Caco-2 (cell line): ENCODE measurements at regions of chr11 and their contacts with region 1.

Region 1: GRCh38 chr11:131748151-131749050 is 378.0 kb downstream of the NTM start:
- DNase-seq: peak; percentile 58 to 72
- H3K4me3 ChIP-seq: no peak overlapping the region
- H3K4me3 Mint-ChIP-seq: no peak overlapping the region
- H3K27ac Mint-ChIP-seq: no peak overlapping the region
- H3K4me1 ChIP-seq: no peaks in the 10 kb centered on the region
- H3K4me1 Mint-ChIP-seq: no peaks in the 10 kb centered on the region
- H3K27me3 ChIP-seq: no peaks in the 10 kb centered on the region
- H3K27me3 Mint-ChIP-seq: peaks cover 6% of the 10 kb centered on the region
- CTCF ChIP-seq: peak; percentile 86 to 92

Region 2: DNA sequence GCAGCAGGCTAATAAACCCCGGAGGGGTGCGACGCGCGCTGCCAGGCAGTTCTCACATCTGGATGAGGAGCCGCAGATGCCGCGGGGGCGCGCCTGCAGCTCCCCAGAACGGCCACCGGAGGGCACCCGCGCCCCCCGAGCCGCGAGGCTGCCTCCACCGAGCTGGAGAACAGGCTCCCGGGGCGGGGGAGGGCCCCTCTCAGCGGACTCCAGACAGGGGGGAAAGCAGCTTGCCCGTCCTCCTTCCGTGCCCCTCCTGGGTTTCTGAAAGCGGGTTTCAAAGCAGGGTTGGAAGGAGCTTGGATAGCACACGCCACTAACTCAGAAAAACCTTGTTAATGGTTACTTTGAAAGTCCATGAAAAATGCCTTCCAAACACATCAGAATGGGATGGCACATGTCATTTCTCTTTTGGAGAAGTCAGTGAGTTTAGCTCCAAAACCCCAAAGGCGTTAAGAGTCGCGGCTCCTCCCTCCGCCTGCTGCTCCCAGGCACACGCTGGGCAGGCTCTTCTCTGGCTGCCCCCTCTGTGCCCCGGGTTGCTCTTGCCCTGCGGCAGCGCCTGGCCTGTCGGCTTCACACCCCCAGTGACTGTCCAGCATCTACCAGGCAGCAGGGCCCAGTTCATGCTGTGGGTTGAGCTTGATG is 60.2 kb before region 1 on chr11:
- CTCF ChIA-PET with region 1: no interaction called
- POLR2A ChIA-PET with region 1: no interaction called
- intact Hi-C with region 1: loop called (anchors 5 kb)
- DNase-seq: peak in 1 of 2 experiments; percentile 77
- H3K4me3 ChIP-seq: no peak overlapping the region
- H3K4me3 Mint-ChIP-seq: no peak overlapping the region
- H3K27ac Mint-ChIP-seq: no peak overlapping the region
- H3K4me1 ChIP-seq: no peaks in the 10 kb centered on the region
- H3K4me1 Mint-ChIP-seq: no peaks in the 10 kb centered on the region
- H3K27me3 ChIP-seq: no peaks in the 10 kb centered on the region
- H3K27me3 Mint-ChIP-seq: peaks cover 16% of the 10 kb centered on the region
- CTCF ChIP-seq: peak; percentile 87 to 94

Region 3: GRCh38 chr11:131792243-131792642 is 43.8 kb after region 1 on chr11:
- CTCF ChIA-PET with region 1: no interaction called
- POLR2A ChIA-PET with region 1: no interaction called
- intact Hi-C with region 1: no loop called
- DNase-seq: no peak
- H3K4me3 ChIP-seq: no peak overlapping the region
- H3K4me3 Mint-ChIP-seq: no peak overlapping the region
- H3K27ac Mint-ChIP-seq: no peak overlapping the region
- H3K4me1 ChIP-seq: no peaks in the 10 kb centered on the region
- H3K4me1 Mint-ChIP-seq: no peaks in the 10 kb centered on the region
- H3K27me3 ChIP-seq: no peaks in the 10 kb centered on the region
- H3K27me3 Mint-ChIP-seq: peaks cover 26% of the 10 kb centered on the region
- CTCF ChIP-seq: no peak

Region 4: GRCh38 chr11:131858505-131858904 is 110.1 kb after region 1 on chr11:
- CTCF ChIA-PET with region 1: interaction called, 10 read pairs
- POLR2A ChIA-PET with region 1: no interaction called
- intact Hi-C with region 1: no loop called
- DNase-seq: no peak
- H3K4me3 ChIP-seq: no peak overlapping the region
- H3K4me3 Mint-ChIP-seq: no peak overlapping the region
- H3K27ac Mint-ChIP-seq: no peak overlapping the region
- H3K4me1 ChIP-seq: no peaks in the 10 kb centered on the region
- H3K4me1 Mint-ChIP-seq: no peaks in the 10 kb centered on the region
- H3K27me3 ChIP-seq: no peaks in the 10 kb centered on the region
- H3K27me3 Mint-ChIP-seq: peaks cover 13% of the 10 kb centered on the region
- CTCF ChIP-seq: no peak

Region 5: DNA sequence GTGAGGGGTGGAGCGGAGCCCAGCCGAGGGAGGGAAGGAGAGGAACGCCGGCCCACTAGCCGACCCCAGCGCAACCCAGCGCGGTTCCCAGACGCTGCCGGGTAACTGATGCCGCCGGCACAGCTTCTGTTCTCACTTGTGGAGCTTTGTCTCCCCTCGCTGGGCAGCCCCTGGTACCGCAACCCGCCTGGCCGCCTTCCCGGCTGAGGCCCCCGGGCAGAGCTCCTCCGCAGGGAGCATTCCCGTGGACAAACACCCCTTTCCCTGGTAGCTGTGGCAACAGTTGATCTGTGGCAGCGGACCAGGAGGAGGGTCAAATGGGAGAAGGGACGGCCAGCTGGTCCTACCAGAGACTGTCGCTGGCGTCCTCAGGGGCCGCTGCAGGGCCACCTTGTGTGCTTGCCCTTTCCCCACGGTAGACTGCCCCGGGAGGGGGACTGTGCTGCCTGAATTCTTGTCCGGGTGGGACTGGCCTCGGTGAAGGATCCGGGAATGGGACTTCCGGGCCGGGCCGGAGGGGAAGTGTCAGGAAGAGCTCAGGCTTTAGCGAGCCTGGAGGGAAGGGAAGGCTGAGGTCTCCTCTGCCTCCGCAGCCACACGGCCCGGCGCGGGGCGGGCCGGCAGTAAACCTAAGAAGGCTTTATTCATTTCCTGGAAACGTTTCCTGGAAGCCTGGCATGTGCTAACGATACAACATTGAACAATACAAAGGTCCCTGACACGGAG is 1315.9 kb after region 1 on chr11:
- CTCF ChIA-PET with region 1: no interaction called
- POLR2A ChIA-PET with region 1: no interaction called
- intact Hi-C with region 1: loop called (anchors 5 kb)
- DNase-seq: peak; percentile 67 to 72
- H3K4me3 ChIP-seq: no peak overlapping the region
- H3K4me3 Mint-ChIP-seq: peak overlapping the region; percentile 12
- H3K27ac Mint-ChIP-seq: no peak overlapping the region
- H3K4me1 ChIP-seq: no peaks in the 10 kb centered on the region
- H3K4me1 Mint-ChIP-seq: no peaks in the 10 kb centered on the region
- H3K27me3 ChIP-seq: no peaks in the 10 kb centered on the region
- H3K27me3 Mint-ChIP-seq: peaks cover 15% of the 10 kb centered on the region
- CTCF ChIP-seq: peak; percentile 55 to 69